ENCODE measurements at regions of chr17 and their contacts with region 1.

Region 1: GRCh38 chr17:75904749-75905521 is at the start of gene MRPL38:
- DNase-seq: peak; percentile 98
- ATAC-seq: peak; percentile 98
- H3K4me3 Mint-ChIP-seq: peak within 1 kb of the TSS; percentile 86
- H3K27ac Mint-ChIP-seq: peak within 1 kb of the TSS; percentile 85
- H3K4me1 Mint-ChIP-seq: peaks cover 20% of the 10 kb centered on the region
- H3K27me3 Mint-ChIP-seq: no peaks in the 10 kb centered on the region
- total RNA-seq, gene MRPL38: 115 to 139 TPM

Region 2: GRCh38 chr17:75712446-75712845 is 192.5 kb before region 1 on chr17:
- CTCF ChIA-PET with region 1: no interaction called
- DNase-seq: no peak
- ATAC-seq: no peak
- H3K4me3 Mint-ChIP-seq: no peak overlapping the region
- H3K27ac Mint-ChIP-seq: no peak overlapping the region
- H3K4me1 Mint-ChIP-seq: no peaks in the 10 kb centered on the region
- H3K27me3 Mint-ChIP-seq: peaks cover 14% of the 10 kb centered on the region

Region 3: DNA sequence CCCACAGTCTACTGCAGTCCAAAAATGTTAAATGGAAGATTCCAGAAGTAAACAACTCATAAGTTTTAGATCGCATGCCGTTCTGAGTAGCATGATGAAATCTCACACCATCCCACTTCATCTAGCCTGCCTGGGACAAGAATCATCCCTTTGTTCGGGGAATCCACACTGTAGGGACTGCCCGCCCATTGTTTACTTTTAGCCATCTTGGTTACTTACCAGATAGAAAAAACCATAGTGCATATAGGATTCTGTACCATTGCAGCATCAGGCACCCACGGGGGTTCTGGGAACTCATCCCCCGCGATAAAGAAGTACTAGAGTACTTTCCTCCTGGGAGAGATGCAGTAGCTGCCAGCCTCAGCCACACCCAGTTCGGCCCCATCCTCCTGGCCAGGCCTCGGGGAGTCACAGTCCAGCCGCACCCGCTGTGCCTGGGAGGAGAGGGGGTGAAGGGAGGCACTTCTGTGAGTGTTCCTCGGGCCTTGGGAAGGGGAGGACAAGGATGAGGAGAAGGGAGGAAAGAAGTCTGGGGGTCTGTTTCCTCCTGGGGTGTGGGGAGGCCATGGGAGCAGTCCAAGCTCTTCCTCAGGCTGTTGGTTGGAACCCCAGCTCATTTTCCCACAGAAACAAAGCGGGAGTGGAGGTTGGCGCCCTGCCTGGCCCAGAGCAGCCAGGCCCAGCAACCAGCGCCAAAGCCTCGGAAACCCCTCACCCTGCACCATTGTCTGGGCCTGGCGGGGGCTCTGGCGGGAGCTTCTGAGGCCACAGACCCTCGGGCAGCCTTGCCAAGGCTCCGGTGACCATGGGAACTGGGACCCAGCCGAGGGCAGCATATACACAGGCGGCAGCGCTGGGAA is 35.4 kb before region 1 on chr17:
- CTCF ChIA-PET with region 1: no interaction called
- DNase-seq: no peak
- ATAC-seq: no peak
- H3K4me3 Mint-ChIP-seq: no peak overlapping the region
- H3K27ac Mint-ChIP-seq: no peak overlapping the region
- H3K4me1 Mint-ChIP-seq: peaks cover 28% of the 10 kb centered on the region
- H3K27me3 Mint-ChIP-seq: no peaks in the 10 kb centered on the region

Region 4: GRCh38 chr17:75927286-75927922 is 22.5 kb after region 1 on chr17:
- CTCF ChIA-PET with region 1: interaction called, 10 read pairs
- DNase-seq: no peak
- ATAC-seq: no peak
- H3K4me3 Mint-ChIP-seq: no peak overlapping the region
- H3K27ac Mint-ChIP-seq: no peak overlapping the region
- H3K4me1 Mint-ChIP-seq: no peaks in the 10 kb centered on the region
- H3K27me3 Mint-ChIP-seq: no peaks in the 10 kb centered on the region

Region 5: DNA sequence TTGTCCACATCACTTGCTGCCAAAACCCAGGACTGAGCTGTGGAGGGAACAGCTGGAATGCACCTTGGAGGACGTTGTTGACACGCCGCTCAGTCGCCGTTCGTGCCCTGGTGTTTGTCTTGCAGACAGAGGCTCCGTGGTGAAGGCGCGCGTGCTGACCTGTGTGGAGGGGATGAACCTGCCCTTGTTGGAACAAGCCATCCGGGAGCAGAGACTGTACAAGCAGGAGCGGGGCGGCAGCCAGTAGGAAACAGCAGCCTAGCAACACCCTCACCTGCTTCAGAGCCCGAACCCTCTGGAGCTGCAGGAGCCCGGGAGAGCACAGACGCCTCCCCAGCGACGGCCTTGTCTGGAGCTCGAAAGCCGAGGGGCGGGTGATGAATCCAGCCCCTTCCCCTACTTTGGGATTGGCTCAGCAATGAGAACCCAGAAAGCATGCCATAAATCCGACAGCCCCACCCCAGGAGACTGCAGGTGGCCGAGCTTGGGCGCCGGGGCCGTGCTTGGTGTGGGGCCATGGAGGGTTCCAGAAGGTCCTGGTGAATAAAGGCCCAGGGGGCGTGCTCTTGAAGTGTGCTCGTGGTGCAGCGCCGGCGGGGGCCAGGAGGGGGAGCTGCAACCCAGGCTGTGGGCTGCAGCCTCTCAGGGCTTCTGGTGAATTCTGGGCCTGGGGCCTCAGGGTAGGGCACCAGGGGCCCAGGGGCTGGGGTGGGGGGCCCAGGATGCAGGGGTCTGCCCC is 95.2 kb after region 1 on chr17:
- CTCF ChIA-PET with region 1: interaction called, 102 read pairs
- DNase-seq: peak; percentile 75
- ATAC-seq: peak; percentile 77
- H3K4me3 Mint-ChIP-seq: no peak overlapping the region
- H3K27ac Mint-ChIP-seq: no peak overlapping the region
- H3K4me1 Mint-ChIP-seq: peaks cover 14% of the 10 kb centered on the region
- H3K27me3 Mint-ChIP-seq: no peaks in the 10 kb centered on the region

Region 6: GRCh38 chr17:76005263-76006149 is 100.6 kb after region 1 on chr17:
- CTCF ChIA-PET with region 1: interaction called, 102 read pairs
- DNase-seq: peak; percentile 88
- ATAC-seq: peak; percentile 75
- H3K4me3 Mint-ChIP-seq: no peak overlapping the region
- H3K27ac Mint-ChIP-seq: peak overlapping the region; percentile 14
- H3K4me1 Mint-ChIP-seq: no peaks in the 10 kb centered on the region
- H3K27me3 Mint-ChIP-seq: no peaks in the 10 kb centered on the region